MCF 10A (cell line): ENCODE measurements at regions of chr15 and their contacts with region 1.

Region 1: GRCh38 chr15:101008158-101009139 is 89.3 kb downstream of the LRRK1 start:
- DNase-seq: peak; percentile 81
- H3K4me3 Mint-ChIP-seq: peak overlapping the region; percentile 72
- H3K27ac Mint-ChIP-seq: no peak overlapping the region
- H3K4me1 Mint-ChIP-seq: peaks cover 11% of the 10 kb centered on the region
- H3K27me3 Mint-ChIP-seq: no peaks in the 10 kb centered on the region
- CTCF ChIP-seq: peak; percentile 93

Region 2: DNA sequence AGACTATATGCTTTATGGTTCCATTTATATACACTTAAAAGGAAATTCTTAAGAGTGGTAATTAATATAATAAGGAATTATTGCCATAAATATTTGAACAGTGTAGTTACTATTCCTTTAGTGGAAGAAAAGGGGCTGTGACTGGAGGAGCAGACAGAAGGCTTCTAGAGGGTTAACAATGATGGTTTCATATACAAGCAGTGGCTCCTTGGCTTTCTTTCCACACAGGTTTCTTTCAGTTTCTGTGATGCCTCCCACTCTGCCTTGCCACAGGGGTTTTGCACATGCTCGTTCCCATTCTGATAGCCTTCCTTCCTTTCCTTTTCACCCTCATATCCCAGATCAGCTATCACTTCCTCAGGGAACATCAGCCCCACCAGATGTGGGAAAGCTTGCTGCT is 1166.4 kb before region 1 on chr15:
- CTCF ChIA-PET with region 1: no interaction called
- POLR2A ChIA-PET with region 1: no interaction called
- intact Hi-C with region 1: no loop called
- DNase-seq: no peak
- H3K4me3 Mint-ChIP-seq: no peak overlapping the region
- H3K27ac Mint-ChIP-seq: no peak overlapping the region
- H3K4me1 Mint-ChIP-seq: no peaks in the 10 kb centered on the region
- H3K27me3 Mint-ChIP-seq: peaks cover 73% of the 10 kb centered on the region
- CTCF ChIP-seq: no peak

Region 3: DNA sequence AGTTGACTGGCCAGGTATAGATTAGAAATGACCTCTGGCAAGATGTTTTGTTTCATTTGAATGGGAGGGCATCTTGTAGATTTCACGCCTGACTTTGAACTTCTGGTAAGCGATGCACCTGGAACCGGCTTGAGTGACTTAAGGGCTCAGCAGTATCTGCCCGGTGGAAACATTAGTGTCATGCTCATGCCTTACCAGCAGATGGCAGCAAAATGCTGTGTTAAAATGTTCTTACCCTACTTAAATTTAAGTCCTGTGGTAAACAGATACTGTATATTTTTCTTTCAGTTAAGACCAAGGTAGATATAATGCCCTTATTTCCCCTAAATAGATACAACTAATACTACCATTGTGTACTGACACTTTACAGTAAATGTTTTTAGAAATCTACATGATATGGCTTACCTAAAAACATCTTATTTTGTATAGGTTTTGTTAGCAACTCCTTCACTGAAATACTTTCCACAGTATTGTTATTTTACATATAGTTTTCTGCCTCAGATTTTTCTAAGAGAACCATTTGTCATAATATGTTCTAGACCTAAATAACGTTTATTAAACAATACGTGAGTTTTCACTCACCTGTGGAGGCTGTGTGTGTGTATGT is 380.6 kb before region 1 on chr15:
- CTCF ChIA-PET with region 1: interaction called, 23 read pairs
- POLR2A ChIA-PET with region 1: interaction called, 3 read pairs
- intact Hi-C with region 1: loop called (anchors 1 kb)
- DNase-seq: peak; percentile 78
- H3K4me3 Mint-ChIP-seq: no peak overlapping the region
- H3K27ac Mint-ChIP-seq: peak overlapping the region; percentile 41
- H3K4me1 Mint-ChIP-seq: peaks cover 6% of the 10 kb centered on the region
- H3K27me3 Mint-ChIP-seq: no peaks in the 10 kb centered on the region
- CTCF ChIP-seq: peak; percentile 84

Region 4: DNA sequence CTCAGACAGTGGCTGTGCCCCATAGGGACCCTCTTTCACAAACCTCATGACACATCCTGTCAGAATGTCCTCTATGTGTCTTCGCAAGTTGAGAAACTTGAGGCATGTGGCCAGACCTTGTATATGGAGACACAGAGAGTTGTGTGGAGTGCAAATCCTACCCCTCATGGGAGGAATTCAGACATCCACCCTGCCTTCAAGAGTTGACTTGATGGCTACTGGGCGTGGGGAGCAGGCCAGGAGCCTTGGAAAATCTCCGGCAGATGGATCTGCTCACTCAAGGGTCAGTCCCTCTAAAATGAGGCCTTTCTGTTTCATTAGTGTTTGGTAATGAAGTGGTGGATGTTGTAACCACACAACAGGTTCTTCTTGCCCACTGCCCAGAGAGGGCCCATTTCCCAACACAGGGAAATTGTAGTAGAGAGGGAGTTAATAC is 327.1 kb before region 1 on chr15:
- CTCF ChIA-PET with region 1: no interaction called
- POLR2A ChIA-PET with region 1: no interaction called
- intact Hi-C with region 1: no loop called
- DNase-seq: no peak
- H3K4me3 Mint-ChIP-seq: no peak overlapping the region
- H3K27ac Mint-ChIP-seq: no peak overlapping the region
- H3K4me1 Mint-ChIP-seq: no peaks in the 10 kb centered on the region
- H3K27me3 Mint-ChIP-seq: no peaks in the 10 kb centered on the region
- CTCF ChIP-seq: no peak

Region 5: DNA sequence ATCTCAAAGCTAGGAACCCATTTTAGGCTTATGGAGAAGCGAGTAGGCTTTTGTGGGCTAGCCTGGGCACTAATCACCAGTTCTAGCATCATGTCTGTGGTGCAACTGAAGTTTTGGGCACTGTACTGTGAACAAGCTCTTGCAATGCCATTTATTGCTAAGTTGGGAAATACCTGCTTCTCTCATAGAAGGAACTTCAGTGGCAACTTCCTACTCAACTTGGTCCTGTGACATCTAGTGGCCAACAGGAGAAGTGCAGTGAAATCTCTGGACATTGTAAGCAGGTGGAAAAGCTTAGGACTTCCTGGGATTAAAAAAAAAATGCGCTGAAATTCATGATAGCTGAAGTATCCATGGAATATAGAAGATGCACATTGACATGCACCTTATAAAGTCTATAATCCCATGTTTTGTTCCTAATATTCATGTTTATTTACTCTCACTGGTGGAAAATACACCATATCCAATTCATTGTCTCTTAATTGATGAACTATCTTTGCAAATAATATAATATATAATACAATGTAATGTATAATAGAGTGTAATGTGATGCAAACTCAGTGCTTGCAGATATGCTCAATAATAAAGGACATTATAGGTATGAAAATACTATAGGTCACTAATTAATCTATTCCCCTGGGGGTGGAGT is 135.3 kb before region 1 on chr15:
- CTCF ChIA-PET with region 1: interaction called, 4 read pairs
- POLR2A ChIA-PET with region 1: no interaction called
- intact Hi-C with region 1: loop called (anchors 2 kb)
- DNase-seq: peak; percentile 89
- H3K4me3 Mint-ChIP-seq: no peak overlapping the region
- H3K27ac Mint-ChIP-seq: no peak overlapping the region
- H3K4me1 Mint-ChIP-seq: peaks cover 5% of the 10 kb centered on the region
- H3K27me3 Mint-ChIP-seq: no peaks in the 10 kb centered on the region
- CTCF ChIP-seq: peak; percentile 73

Region 6: DNA sequence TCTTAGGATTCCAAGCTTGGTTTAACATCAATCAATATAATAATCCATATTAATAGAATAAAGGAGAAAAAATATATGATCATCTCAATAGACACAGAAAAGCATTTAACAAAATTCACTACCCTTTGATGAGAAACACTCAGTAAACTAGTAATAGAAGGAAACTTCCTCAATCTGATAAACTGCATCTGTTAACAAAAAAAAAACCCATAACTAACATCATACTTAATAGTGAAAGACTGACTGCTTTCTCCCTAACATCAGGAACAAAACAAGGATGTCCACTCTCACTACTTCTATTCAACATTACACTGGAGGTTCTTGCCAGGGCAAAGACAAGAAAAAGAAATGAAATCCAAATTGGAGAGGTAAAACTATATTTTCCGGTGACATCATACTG is 58.8 kb before region 1 on chr15:
- CTCF ChIA-PET with region 1: no interaction called
- POLR2A ChIA-PET with region 1: no interaction called
- intact Hi-C with region 1: no loop called
- DNase-seq: no peak
- H3K4me3 Mint-ChIP-seq: no peak overlapping the region
- H3K27ac Mint-ChIP-seq: no peak overlapping the region
- H3K4me1 Mint-ChIP-seq: no peaks in the 10 kb centered on the region
- H3K27me3 Mint-ChIP-seq: no peaks in the 10 kb centered on the region
- CTCF ChIP-seq: no peak

Region 7: GRCh38 chr15:101031213-101031612 is 22.8 kb after region 1 on chr15:
- CTCF ChIA-PET with region 1: interaction called, 16 read pairs
- POLR2A ChIA-PET with region 1: no interaction called
- intact Hi-C with region 1: no loop called
- DNase-seq: peak; percentile 34
- H3K4me3 Mint-ChIP-seq: no peak overlapping the region
- H3K27ac Mint-ChIP-seq: no peak overlapping the region
- H3K4me1 Mint-ChIP-seq: peaks cover 6% of the 10 kb centered on the region
- H3K27me3 Mint-ChIP-seq: no peaks in the 10 kb centered on the region
- CTCF ChIP-seq: no peak